Endothelial cell of umbilical vein (primary cell): ENCODE measurements at regions of chr1 and their contacts with region 1.

Region 1: GRCh38 chr1:72170246-72170645 is 112.1 kb downstream of the NEGR1 start:
- DNase-seq: peak; percentile 53
- H3K4me3 ChIP-seq: no peak overlapping the region
- H3K27ac ChIP-seq: no peak overlapping the region
- H3K4me1 ChIP-seq: peaks cover 31% of the 10 kb centered on the region
- H3K27me3 ChIP-seq: no peaks in the 10 kb centered on the region
- CTCF ChIP-seq: no peak
- POLR2A ChIP-seq: no peak

Region 2: DNA sequence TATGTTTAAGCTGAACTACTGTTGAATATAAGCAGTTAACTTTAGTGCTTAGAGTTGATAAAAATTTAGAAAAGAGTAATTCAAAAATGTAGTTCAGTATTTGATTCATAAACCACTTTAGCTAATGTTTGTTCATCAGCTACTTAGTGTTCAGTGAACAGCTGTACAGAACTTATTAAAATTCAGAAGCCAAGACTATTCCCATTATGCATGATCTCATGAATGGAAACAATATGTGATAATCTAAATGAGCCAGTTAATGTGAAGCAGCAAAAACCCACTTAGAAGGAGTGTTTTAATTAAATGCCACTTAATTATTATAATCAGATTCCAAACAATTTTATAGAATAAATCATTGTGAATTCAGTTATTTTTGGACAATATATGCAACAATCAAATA is 205.0 kb after region 1 on chr1:
- CTCF ChIA-PET with region 1: no interaction called
- POLR2A ChIA-PET with region 1: no interaction called
- dilution Hi-C with region 1: no loop called
- intact Hi-C with region 1: loop called (anchors 5 kb)
- DNase-seq: no peak
- H3K4me3 ChIP-seq: no peak overlapping the region
- H3K27ac ChIP-seq: no peak overlapping the region
- H3K4me1 ChIP-seq: no peaks in the 10 kb centered on the region
- H3K27me3 ChIP-seq: no peaks in the 10 kb centered on the region
- CTCF ChIP-seq: no peak
- POLR2A ChIP-seq: no peak

Region 3: GRCh38 chr1:72635719-72636118 is 465.5 kb after region 1 on chr1:
- CTCF ChIA-PET with region 1: no interaction called
- POLR2A ChIA-PET with region 1: no interaction called
- dilution Hi-C with region 1: no loop called
- intact Hi-C with region 1: no loop called
- DNase-seq: no peak
- H3K4me3 ChIP-seq: no peak overlapping the region
- H3K27ac ChIP-seq: no peak overlapping the region
- H3K4me1 ChIP-seq: no peaks in the 10 kb centered on the region
- H3K27me3 ChIP-seq: no peaks in the 10 kb centered on the region
- CTCF ChIP-seq: no peak
- POLR2A ChIP-seq: no peak